ENCODE measurements at regions of chr4 and their contacts with region 1.

Region 1: DNA sequence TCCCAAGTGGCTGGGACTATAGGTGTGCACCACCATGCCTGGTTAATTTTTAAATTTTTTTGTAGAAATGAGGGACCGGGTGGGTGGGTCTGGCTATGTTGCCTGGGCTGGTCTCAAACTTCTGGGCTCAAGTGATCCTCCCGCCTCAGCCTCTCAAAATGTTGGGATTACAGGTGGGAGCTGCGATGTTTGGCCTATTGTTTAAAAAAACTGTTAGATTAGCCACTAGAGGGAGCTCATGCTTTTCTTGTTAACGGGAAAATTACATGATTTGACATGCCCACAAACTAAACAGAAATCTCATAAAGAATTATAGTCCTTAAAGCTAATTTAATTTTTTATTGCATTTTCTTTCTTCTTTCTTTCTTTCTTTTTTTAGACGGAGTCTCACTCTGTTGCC is 5.0 kb upstream of the SDAD1 start:
- DNase-seq: no peak
- H3K4me3 ChIP-seq: no peak overlapping the region
- H3K27ac ChIP-seq: no peak overlapping the region
- H3K4me1 ChIP-seq: no peaks in the 10 kb centered on the region; a peak in 1 of 7 replicates
- H3K27me3 ChIP-seq: no peaks in the 10 kb centered on the region
- CTCF ChIP-seq: peak in 2 of 3 experiments; percentile 44 to 54; a peak in 3 of 4 replicates
- EP300 ChIP-seq: no peak
- POLR2A ChIP-seq: no peak
- RAD21 ChIP-seq: peak; percentile 69 to 77

Region 2: DNA sequence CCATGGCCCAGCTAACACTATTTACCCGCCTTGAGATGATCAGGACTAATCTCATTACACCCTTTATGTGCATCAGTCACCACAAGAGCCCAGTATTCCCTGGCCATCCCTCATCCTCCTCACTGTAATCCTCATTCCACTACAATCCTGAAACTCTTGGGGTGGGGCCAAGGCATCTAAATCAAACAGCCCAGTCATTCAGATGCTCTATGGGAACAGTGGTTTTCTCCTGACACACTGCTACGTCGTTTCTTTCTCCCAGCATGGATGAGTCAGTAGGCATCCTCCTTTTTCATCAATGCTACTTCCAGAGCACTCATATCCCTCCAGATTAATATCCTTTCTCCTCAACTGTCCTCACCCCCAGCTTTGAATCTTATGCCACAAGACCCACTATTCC is 10.6 kb before region 1 on chr4:
- CTCF ChIA-PET with region 1: interaction called, 12 read pairs
- POLR2A ChIA-PET with region 1: interaction called, 4 read pairs
- DNase-seq: no peak
- H3K4me3 ChIP-seq: no peak overlapping the region
- H3K27ac ChIP-seq: no peak overlapping the region
- H3K4me1 ChIP-seq: peaks cover 0 to 4% (median 0%) of the 10 kb centered on the region in 4 experiments; a peak in 4 of 7 replicates
- H3K27me3 ChIP-seq: no peaks in the 10 kb centered on the region
- CTCF ChIP-seq: no peak
- EP300 ChIP-seq: no peak
- POLR2A ChIP-seq: no peak
- RAD21 ChIP-seq: no peak

Region 3: DNA sequence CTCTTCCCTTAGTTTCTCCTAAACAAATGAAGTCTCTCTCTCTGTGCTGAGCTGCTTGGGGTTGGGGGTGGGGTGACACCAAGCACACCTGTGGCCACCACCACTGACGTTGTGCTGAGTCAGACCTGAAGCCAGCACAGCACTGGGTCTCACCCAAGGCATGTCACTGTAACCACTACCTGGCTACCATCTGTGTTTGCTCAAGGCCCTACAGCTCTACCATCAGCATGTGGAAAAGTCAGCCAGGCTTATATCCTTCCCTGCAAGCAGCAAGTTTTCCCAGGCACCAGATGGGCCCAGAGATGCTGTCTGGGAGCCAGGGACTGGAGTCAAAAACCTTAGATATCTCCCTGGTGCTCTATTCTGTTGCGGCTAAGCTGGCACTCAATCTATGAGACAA is 20.7 kb after region 1 on chr4:
- CTCF ChIA-PET with region 1: interaction called, 12 read pairs
- POLR2A ChIA-PET with region 1: no interaction called
- DNase-seq: no peak
- H3K4me3 ChIP-seq: no peak overlapping the region
- H3K27ac ChIP-seq: no peak overlapping the region
- H3K4me1 ChIP-seq: peaks cover 0 to 7% (median 3%) of the 10 kb centered on the region in 4 experiments; a peak in 4 of 7 replicates
- H3K27me3 ChIP-seq: no peaks in the 10 kb centered on the region; a peak in 1 of 7 replicates
- CTCF ChIP-seq: no peak
- EP300 ChIP-seq: no peak
- POLR2A ChIP-seq: no peak
- RAD21 ChIP-seq: no peak

Region 4: DNA sequence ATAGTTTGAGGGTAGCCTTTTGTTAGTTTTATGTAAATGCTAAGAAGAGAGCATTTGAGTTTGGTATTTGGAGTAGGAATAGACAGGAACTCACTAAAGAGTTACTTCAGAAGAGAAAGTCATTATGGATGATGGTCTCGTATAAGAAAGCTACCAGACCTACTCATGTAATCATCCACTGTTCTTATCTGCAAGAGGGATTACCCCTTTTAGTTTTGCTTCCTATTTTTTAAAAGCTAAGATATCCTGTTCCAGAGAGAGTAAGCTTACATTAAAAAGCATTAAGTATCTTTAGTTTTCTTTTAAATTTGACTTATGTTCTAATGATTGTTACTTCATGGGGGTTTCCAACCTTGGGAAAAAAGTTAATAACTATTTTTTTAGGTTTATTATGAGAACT is 66.3 kb after region 1 on chr4:
- CTCF ChIA-PET with region 1: interaction called, 88 read pairs
- POLR2A ChIA-PET with region 1: no interaction called
- DNase-seq: no peak
- H3K4me3 ChIP-seq: no peak overlapping the region
- H3K27ac ChIP-seq: no peak overlapping the region
- H3K4me1 ChIP-seq: no peaks in the 10 kb centered on the region
- H3K27me3 ChIP-seq: peaks cover 0 to 2% (median 0%) of the 10 kb centered on the region in 4 experiments; a peak in 1 of 7 replicates
- CTCF ChIP-seq: no peak
- EP300 ChIP-seq: no peak
- POLR2A ChIP-seq: no peak
- RAD21 ChIP-seq: no peak

Region 5: GRCh38 chr4:76087007-76087769 is 91.5 kb after region 1 on chr4:
- CTCF ChIA-PET with region 1: interaction called, 89 read pairs
- POLR2A ChIA-PET with region 1: interaction called, 5 read pairs
- DNase-seq: peak; percentile 59 to 64
- H3K4me3 ChIP-seq: peak overlapping the region in 1 of 4 experiments; percentile 34; a peak in 1 of 8 replicates
- H3K27ac ChIP-seq: no peak overlapping the region
- H3K4me1 ChIP-seq: no peaks in the 10 kb centered on the region
- H3K27me3 ChIP-seq: no peaks in the 10 kb centered on the region
- CTCF ChIP-seq: peak; percentile 22 to 80 (median 67)
- EP300 ChIP-seq: no peak
- POLR2A ChIP-seq: no peak
- RAD21 ChIP-seq: peak; percentile 88 to 90

Measured in H1 (cell line).